ENCODE measurements at regions of chr10 and their contacts with region 1.

Region 1: GRCh38 chr10:63157845-63158624 is 24.9 kb downstream of the NRBF2 start:
- DNase-seq: peak; percentile 91
- H3K4me3 ChIP-seq: no peak overlapping the region
- CTCF ChIP-seq: peak; percentile 77

Region 2: DNA sequence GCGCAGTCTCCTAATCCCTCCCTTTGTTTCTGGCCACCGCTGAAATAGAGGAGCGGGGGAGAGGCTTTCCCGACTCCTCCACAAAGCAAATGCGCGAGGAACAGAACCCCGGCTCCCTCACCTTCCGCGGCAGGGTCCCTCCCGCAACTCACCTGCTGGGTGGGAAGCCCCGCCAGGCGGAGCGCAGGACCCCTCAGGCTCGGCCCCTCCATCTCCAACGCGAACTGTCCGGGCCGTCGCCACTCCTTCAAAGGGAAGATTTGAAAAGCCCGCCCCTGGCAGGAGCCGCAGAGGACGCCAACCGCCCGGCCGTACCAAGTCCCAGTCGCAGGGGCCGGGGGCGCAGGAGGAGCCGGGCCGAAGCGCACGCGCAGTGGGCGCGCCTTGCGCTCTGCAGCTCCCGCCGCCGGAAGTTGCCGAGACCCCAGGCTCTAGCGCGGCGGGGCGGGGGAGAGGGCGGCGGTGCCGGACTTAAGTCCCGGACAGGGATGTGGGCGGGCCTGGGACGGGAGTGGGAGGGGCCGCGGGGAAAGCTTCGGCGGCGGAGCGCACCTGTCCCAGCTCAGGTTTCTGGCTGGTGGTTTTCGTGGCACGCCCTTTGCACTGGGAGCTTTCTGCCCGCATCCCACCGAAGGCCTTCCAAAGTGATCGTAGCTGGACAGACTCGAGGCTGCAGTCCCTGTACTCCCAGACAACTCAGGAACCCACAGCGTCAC is 889.5 kb before region 1 on chr10 and contains the start of gene RTKN2:
- in situ Hi-C with region 1: loop called (anchors 5 kb)
- DNase-seq: peak; percentile 57
- H3K4me3 ChIP-seq: peak within 1 kb of the TSS; percentile 68
- CTCF ChIP-seq: no peak

Measured in astrocyte of the cerebellum (primary cell).